Activated CD8-positive, alpha-beta T cell treated with anti-CD3 and anti-CD28 coated beads for 36 hours (primary cell): ENCODE measurements at regions of chr18 and their contacts with region 1.

Region 1: DNA sequence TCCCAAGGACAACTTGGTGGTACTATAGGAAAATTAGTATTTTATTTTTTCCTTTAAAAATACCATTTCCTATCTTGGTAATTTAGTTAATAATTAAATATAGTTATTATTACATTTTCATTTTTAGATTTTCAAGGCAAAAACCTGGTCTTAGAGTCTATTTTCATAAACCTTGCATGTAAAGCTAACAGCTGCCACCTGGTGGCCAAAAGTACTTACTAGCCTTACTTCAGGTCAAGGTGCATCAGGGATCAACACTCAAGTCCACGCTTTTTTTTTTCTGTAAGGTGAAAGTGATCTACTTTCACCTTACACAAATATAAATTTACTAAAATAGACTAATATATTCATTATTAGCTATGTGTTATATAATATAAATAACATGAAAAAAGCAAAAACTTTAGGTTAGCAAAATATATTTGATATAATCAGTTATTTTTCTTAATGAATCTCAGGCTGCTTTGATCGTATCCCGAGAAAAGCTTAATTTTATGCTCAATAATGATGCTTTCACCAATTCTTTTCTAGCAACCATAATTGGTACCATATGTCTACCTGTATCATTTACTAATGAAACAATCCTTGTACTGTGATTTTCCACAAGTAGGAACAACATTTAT is 62.5 kb downstream of the RELCH start:
- DNase-seq: peak; percentile 94
- ATAC-seq: peak; percentile 74
- H3K4me3 Mint-ChIP-seq: no peak overlapping the region
- H3K27ac Mint-ChIP-seq: no peak overlapping the region
- H3K4me1 Mint-ChIP-seq: no peaks in the 10 kb centered on the region
- H3K27me3 Mint-ChIP-seq: no peaks in the 10 kb centered on the region
- CTCF ChIP-seq: peak; percentile 92

Region 2: GRCh38 chr18:62179213-62179612 is 70.4 kb before region 1 on chr18:
- CTCF ChIA-PET with region 1: interaction called, 125 read pairs
- POLR2A ChIA-PET with region 1: interaction called, 3 read pairs
- intact Hi-C with region 1: no loop called
- DNase-seq: no peak
- ATAC-seq: no peak
- H3K4me3 Mint-ChIP-seq: no peak overlapping the region
- H3K27ac Mint-ChIP-seq: no peak overlapping the region
- H3K4me1 Mint-ChIP-seq: peaks cover 8% of the 10 kb centered on the region
- H3K27me3 Mint-ChIP-seq: no peaks in the 10 kb centered on the region
- CTCF ChIP-seq: no peak

Region 3: GRCh38 chr18:62186774-62187542 is 62.6 kb before region 1 on chr18 and contains the starts of genes PIGN and RELCH:
- CTCF ChIA-PET with region 1: interaction called, 125 read pairs
- POLR2A ChIA-PET with region 1: interaction called, 12 read pairs
- intact Hi-C with region 1: loop called (anchors 2 kb)
- DNase-seq: peak; percentile 97
- ATAC-seq: peak; percentile 94
- H3K4me3 Mint-ChIP-seq: peak within 1 kb of the TSS; percentile 99
- H3K27ac Mint-ChIP-seq: peak within 1 kb of the TSS; percentile 96
- H3K4me1 Mint-ChIP-seq: peaks cover 48% of the 10 kb centered on the region
- H3K27me3 Mint-ChIP-seq: no peaks in the 10 kb centered on the region
- CTCF ChIP-seq: no peak
- total RNA-seq, gene PIGN: 24.9 to 28.1 TPM
- total RNA-seq, gene RELCH: 18.4 to 21.7 TPM

Region 4: GRCh38 chr18:62224229-62224628 is 25.4 kb before region 1 on chr18:
- CTCF ChIA-PET with region 1: interaction called, 11 read pairs
- POLR2A ChIA-PET with region 1: no interaction called
- intact Hi-C with region 1: no loop called
- DNase-seq: no peak
- ATAC-seq: no peak
- H3K4me3 Mint-ChIP-seq: no peak overlapping the region
- H3K27ac Mint-ChIP-seq: no peak overlapping the region
- H3K4me1 Mint-ChIP-seq: peaks cover 5% of the 10 kb centered on the region
- H3K27me3 Mint-ChIP-seq: no peaks in the 10 kb centered on the region
- CTCF ChIP-seq: no peak

Region 5: GRCh38 chr18:62312851-62313250 is 63.3 kb after region 1 on chr18:
- CTCF ChIA-PET with region 1: no interaction called
- POLR2A ChIA-PET with region 1: no interaction called
- intact Hi-C with region 1: no loop called
- DNase-seq: no peak
- ATAC-seq: no peak
- H3K4me3 Mint-ChIP-seq: no peak overlapping the region
- H3K27ac Mint-ChIP-seq: no peak overlapping the region
- H3K4me1 Mint-ChIP-seq: no peaks in the 10 kb centered on the region
- H3K27me3 Mint-ChIP-seq: peaks cover 2% of the 10 kb centered on the region
- CTCF ChIP-seq: no peak